ENCODE measurements at regions of chr17 and their contacts with region 1.

Region 1: DNA sequence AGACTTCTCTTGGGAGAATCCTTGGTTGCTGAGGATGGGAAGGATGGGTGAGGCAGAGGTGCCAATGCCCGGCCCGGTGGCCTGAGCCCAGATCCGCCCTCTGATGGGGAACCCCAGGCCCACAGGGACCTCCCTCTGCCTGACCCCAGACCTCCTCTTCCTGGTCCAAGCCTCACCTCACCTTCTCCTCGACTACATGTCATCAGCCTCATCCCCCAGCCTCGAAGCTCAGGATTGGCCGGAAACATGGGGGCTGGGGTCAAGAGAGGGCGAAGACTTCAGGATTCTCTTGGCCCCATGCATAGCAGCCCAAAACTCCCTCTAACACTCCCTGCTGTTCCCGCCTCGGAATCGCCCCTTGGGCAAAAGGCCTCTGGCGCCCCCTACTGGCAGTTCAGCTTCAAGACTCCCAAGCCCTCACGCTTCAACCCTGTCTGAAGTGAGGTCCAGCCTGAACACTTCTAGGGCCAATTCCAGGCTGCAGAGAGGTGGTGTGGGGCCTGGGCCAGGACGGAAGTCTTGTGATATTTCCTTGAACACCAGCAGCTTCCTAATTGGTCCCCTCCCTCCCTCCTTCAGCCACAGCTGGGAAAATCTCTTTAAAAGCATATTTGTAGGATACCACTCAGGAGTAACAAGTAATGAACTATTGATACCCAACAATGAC is 47.2 kb downstream of the ARHGAP27 start:
- DNase-seq: peak; percentile 93
- H3K4me3 Mint-ChIP-seq: no peak overlapping the region
- H3K27ac Mint-ChIP-seq: no peak overlapping the region
- H3K4me1 Mint-ChIP-seq: peaks cover 13% of the 10 kb centered on the region
- H3K27me3 Mint-ChIP-seq: peaks cover 7% of the 10 kb centered on the region

Region 2: GRCh38 chr17:45235416-45236281 is 149.8 kb before region 1 on chr17:
- CTCF ChIA-PET with region 1: interaction called, 11 read pairs
- POLR2A ChIA-PET with region 1: no interaction called
- intact Hi-C with region 1: no loop called
- DNase-seq: peak; percentile 83
- H3K4me3 Mint-ChIP-seq: no peak overlapping the region
- H3K27ac Mint-ChIP-seq: peak overlapping the region; percentile 73
- H3K4me1 Mint-ChIP-seq: peaks cover 63% of the 10 kb centered on the region
- H3K27me3 Mint-ChIP-seq: no peaks in the 10 kb centered on the region

Region 3: GRCh38 chr17:45261577-45262515 is 123.6 kb before region 1 on chr17 and contains the start of gene SPATA32:
- CTCF ChIA-PET with region 1: interaction called, 20 read pairs
- POLR2A ChIA-PET with region 1: no interaction called
- intact Hi-C with region 1: loop called (anchors 5 kb)
- DNase-seq: peak; percentile 79
- H3K4me3 Mint-ChIP-seq: peak within 1 kb of the TSS; percentile 69
- H3K27ac Mint-ChIP-seq: peak within 1 kb of the TSS; percentile 67
- H3K4me1 Mint-ChIP-seq: peaks cover 21% of the 10 kb centered on the region
- H3K27me3 Mint-ChIP-seq: no peaks in the 10 kb centered on the region
- total RNA-seq, gene SPATA32: 0.12 TPM in 1 of 2 experiments, not detected in the other

Region 4: GRCh38 chr17:45277216-45277849 is 108.1 kb before region 1 on chr17:
- CTCF ChIA-PET with region 1: interaction called, 249 read pairs
- POLR2A ChIA-PET with region 1: interaction called, 4 read pairs
- intact Hi-C with region 1: loop called (anchors 1 kb)
- DNase-seq: peak; percentile 93
- H3K4me3 Mint-ChIP-seq: no peak overlapping the region
- H3K27ac Mint-ChIP-seq: peak overlapping the region; percentile 74
- H3K4me1 Mint-ChIP-seq: peaks cover 16% of the 10 kb centered on the region
- H3K27me3 Mint-ChIP-seq: no peaks in the 10 kb centered on the region

Region 5: DNA sequence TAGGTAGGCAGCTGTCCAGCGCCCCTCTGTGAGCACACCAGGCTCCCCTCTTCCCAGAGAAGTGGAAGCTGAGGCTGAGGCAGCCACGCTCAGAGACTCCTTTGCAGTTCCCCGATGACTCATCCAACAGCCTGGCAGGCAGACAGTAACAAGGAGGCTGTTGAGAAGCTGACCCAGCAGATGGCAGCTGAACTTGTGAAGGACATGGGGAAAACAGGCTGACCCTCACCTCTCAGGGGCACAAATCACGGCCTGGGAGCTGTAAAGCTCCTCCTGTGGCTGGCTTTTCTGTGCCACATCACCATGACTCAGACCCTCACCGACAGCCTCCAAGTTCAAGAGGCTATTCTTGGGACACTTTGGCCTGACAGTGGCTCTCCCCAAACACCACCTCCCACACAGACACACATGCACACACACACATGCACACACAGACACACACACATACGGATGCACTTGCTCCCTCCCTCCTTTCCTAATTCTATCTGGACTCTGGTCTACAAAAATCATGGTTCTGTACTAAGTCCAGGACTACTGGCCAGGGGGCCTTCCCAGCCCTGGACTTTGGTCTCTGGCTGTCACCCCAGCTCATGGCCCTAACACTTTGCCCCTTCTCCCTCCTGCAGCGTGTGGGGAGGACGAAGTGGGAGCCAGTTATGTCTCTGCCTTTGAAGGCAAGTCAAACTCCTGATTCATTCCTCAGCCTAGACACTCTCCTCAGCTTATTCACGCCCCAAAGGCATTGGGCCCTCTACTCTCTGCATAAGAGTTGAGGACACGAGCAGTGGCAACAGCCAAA is 91.9 kb before region 1 on chr17:
- CTCF ChIA-PET with region 1: interaction called, 20 read pairs
- POLR2A ChIA-PET with region 1: no interaction called
- intact Hi-C with region 1: no loop called
- DNase-seq: peak; percentile 57
- H3K4me3 Mint-ChIP-seq: no peak overlapping the region
- H3K27ac Mint-ChIP-seq: peak overlapping the region; percentile 79
- H3K4me1 Mint-ChIP-seq: peaks cover 72% of the 10 kb centered on the region
- H3K27me3 Mint-ChIP-seq: no peaks in the 10 kb centered on the region

Region 6: GRCh38 chr17:45317112-45317928 is 68.1 kb before region 1 on chr17:
- CTCF ChIA-PET with region 1: interaction called, 26 read pairs
- POLR2A ChIA-PET with region 1: interaction called, 4 read pairs
- intact Hi-C with region 1: loop called (anchors 2 kb)
- DNase-seq: peak; percentile 100
- H3K4me3 Mint-ChIP-seq: peak overlapping the region; percentile 81
- H3K27ac Mint-ChIP-seq: peak overlapping the region; percentile 89
- H3K4me1 Mint-ChIP-seq: peaks cover 65% of the 10 kb centered on the region
- H3K27me3 Mint-ChIP-seq: no peaks in the 10 kb centered on the region